ENCODE measurements at regions of chr10 and their contacts with region 1.

Region 1: GRCh38 chr10:95561182-95562075 is at the start of gene SORBS1:
- DNase-seq: peak; percentile 85 to 92 (median 87)
- H3K4me3 ChIP-seq: peak within 1 kb of the TSS; percentile 90 to 92
- H3K4me3 Mint-ChIP-seq: peak within 1 kb of the TSS; percentile 96 to 100 (median 100)
- H3K27ac ChIP-seq: peak within 1 kb of the TSS; percentile 54
- H3K27ac Mint-ChIP-seq: peak within 1 kb of the TSS; percentile 83 to 99 (median 96)
- H3K4me1 ChIP-seq: peaks cover 10% of the 10 kb centered on the region
- H3K4me1 Mint-ChIP-seq: peaks cover 8 to 23% (median 11%) of the 10 kb centered on the region in 4 donors
- H3K27me3 ChIP-seq: no peaks in the 10 kb centered on the region
- H3K27me3 Mint-ChIP-seq: peaks cover 0 to 4% of the 10 kb centered on the region in 2 donors
- total RNA-seq, gene SORBS1: 0.67 to 0.93 TPM

Region 2: GRCh38 chr10:95656291-95657164 is 95.1 kb after region 1 on chr10 and contains the start of gene ALDH18A1:
- CTCF ChIA-PET with region 1: no interaction called
- POLR2A ChIA-PET with region 1: no interaction called
- intact Hi-C with region 1: loop called (anchors 5 kb)
- DNase-seq: peak; percentile 86 to 93 (median 89)
- H3K4me3 ChIP-seq: peak within 1 kb of the TSS; percentile 32 to 74
- H3K4me3 Mint-ChIP-seq: peak within 1 kb of the TSS; percentile 98 to 100 (median 99)
- H3K27ac ChIP-seq: peak within 1 kb of the TSS; percentile 54
- H3K27ac Mint-ChIP-seq: peak within 1 kb of the TSS; percentile 81 to 99 (median 95)
- H3K4me1 ChIP-seq: peaks cover 21% of the 10 kb centered on the region
- H3K4me1 Mint-ChIP-seq: peaks cover 12 to 37% (median 24%) of the 10 kb centered on the region in 4 donors
- H3K27me3 ChIP-seq: no peaks in the 10 kb centered on the region
- H3K27me3 Mint-ChIP-seq: no peaks in the 10 kb centered on the region
- total RNA-seq, gene ALDH18A1: 25.9 to 29.3 TPM